Activated CD8-positive, alpha-beta T cell treated with anti-CD3 and anti-CD28 coated beads, Interleukin-2, amount 10 ng/mL, durations not matched to agents 7 days and 5 days (primary cell): ENCODE measurements at regions of chr19 and their contacts with region 1.

Region 1: GRCh38 chr19:18846862-18847548 is 15.2 kb downstream of the UPF1 start:
- DNase-seq: peak; percentile 74
- ATAC-seq: peak; percentile 78
- H3K4me3 Mint-ChIP-seq: no peak overlapping the region
- H3K27ac Mint-ChIP-seq: peak overlapping the region; percentile 60
- H3K4me1 Mint-ChIP-seq: peaks cover 69% of the 10 kb centered on the region
- H3K27me3 Mint-ChIP-seq: no peaks in the 10 kb centered on the region

Region 2: DNA sequence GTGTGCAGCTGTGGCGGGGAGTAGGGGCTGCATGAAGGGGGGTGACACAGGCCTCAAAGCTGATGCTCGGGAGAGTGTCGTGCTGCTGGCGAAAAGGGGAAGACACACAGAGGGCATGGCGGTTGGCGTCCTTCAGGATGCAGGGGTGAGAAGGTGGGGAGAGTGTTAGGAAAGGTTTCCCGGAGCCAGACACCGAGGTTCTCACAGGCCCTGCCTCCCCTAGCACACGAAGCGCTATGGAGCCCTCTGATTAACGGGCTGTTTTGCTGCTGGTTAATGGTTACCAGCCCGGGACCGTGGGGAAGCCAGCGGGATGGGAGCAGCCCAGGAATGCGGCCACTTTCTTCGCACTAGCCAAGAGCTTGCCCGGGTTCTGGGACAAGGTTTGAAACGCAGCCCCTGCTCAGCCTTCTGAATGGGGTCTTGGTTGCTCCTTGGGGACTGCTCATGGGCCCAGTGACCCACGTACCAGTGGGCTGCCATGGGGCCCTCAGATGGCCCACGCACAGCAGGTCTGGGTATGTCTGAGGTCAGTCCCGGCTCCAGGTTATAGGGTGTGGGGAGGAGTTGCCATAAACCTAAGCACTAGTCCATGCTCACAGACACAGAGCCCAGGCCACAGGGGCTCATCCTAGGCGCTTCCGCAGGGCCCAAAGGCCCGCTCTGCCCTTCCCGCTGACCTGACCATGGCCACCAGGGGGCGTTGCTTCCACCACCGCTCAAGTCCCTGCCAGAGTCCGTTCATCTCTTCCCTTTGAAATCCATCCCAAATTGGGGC is 377.7 kb before region 1 on chr19:
- CTCF ChIA-PET with region 1: interaction called, 12 read pairs
- POLR2A ChIA-PET with region 1: no interaction called
- DNase-seq: peak; percentile 69
- ATAC-seq: peak; percentile 49
- H3K4me3 Mint-ChIP-seq: no peak overlapping the region
- H3K27ac Mint-ChIP-seq: no peak overlapping the region
- H3K4me1 Mint-ChIP-seq: peaks cover 32% of the 10 kb centered on the region
- H3K27me3 Mint-ChIP-seq: no peaks in the 10 kb centered on the region

Region 3: GRCh38 chr19:18588611-18589379 is 258.2 kb before region 1 on chr19 and contains the start of gene REX1BD:
- CTCF ChIA-PET with region 1: interaction called, 23 read pairs
- POLR2A ChIA-PET with region 1: interaction called, 3 read pairs
- DNase-seq: peak; percentile 93
- ATAC-seq: peak; percentile 79
- H3K4me3 Mint-ChIP-seq: peak within 1 kb of the TSS; percentile 83
- H3K27ac Mint-ChIP-seq: peak within 1 kb of the TSS; percentile 96
- H3K4me1 Mint-ChIP-seq: peaks cover 47% of the 10 kb centered on the region
- H3K27me3 Mint-ChIP-seq: no peaks in the 10 kb centered on the region
- total RNA-seq, gene REX1BD: 91.5 to 98.7 TPM

Region 4: GRCh38 chr19:18831524-18832305 is 15.3 kb before region 1 on chr19 and contains the start of gene UPF1:
- CTCF ChIA-PET with region 1: interaction called, 104 read pairs
- POLR2A ChIA-PET with region 1: interaction called, 26 read pairs
- DNase-seq: peak; percentile 97
- ATAC-seq: peak; percentile 89
- H3K4me3 Mint-ChIP-seq: peak within 1 kb of the TSS; percentile 96
- H3K27ac Mint-ChIP-seq: peak within 1 kb of the TSS; percentile 89
- H3K4me1 Mint-ChIP-seq: peaks cover 39% of the 10 kb centered on the region
- H3K27me3 Mint-ChIP-seq: peaks cover 6% of the 10 kb centered on the region
- total RNA-seq, gene UPF1: 81.8 to 84.0 TPM

Region 5: GRCh38 chr19:18932216-18932841 is 85.3 kb after region 1 on chr19:
- CTCF ChIA-PET with region 1: no interaction called
- POLR2A ChIA-PET with region 1: no interaction called
- DNase-seq: peak; percentile 84
- ATAC-seq: peak; percentile 93
- H3K4me3 Mint-ChIP-seq: peak overlapping the region; percentile 62
- H3K27ac Mint-ChIP-seq: no peak overlapping the region
- H3K4me1 Mint-ChIP-seq: peaks cover 3% of the 10 kb centered on the region
- H3K27me3 Mint-ChIP-seq: peaks cover 9% of the 10 kb centered on the region